Dendritic cell treated with granulocyte-macrophage colony-stimulating factor and Interleukin-4, amounts not matched to agents 40 ng/mL and 50 ng/mL, for 4 days (primary cell): ENCODE measurements at regions of chr7 and their contacts with region 1.

Region 1: GRCh38 chr7:120725376-120726039 is 132.4 kb downstream of the TSPAN12 start:
- H3K4me3 Mint-ChIP-seq: no peak overlapping the region
- H3K27ac Mint-ChIP-seq: no peak overlapping the region
- H3K4me1 Mint-ChIP-seq: no peaks in the 10 kb centered on the region
- H3K27me3 Mint-ChIP-seq: peaks cover 12% of the 10 kb centered on the region

Region 2: GRCh38 chr7:119270045-119270464 is 1455.5 kb before region 1 on chr7:
- intact Hi-C with region 1: loop called (anchors 5 kb)
- H3K4me3 Mint-ChIP-seq: no peak overlapping the region
- H3K27ac Mint-ChIP-seq: no peak overlapping the region
- H3K4me1 Mint-ChIP-seq: no peaks in the 10 kb centered on the region
- H3K27me3 Mint-ChIP-seq: no peaks in the 10 kb centered on the region

Region 3: GRCh38 chr7:119733127-119733879 is 992.2 kb before region 1 on chr7:
- intact Hi-C with region 1: no loop called
- H3K4me3 Mint-ChIP-seq: no peak overlapping the region
- H3K27ac Mint-ChIP-seq: no peak overlapping the region
- H3K4me1 Mint-ChIP-seq: no peaks in the 10 kb centered on the region
- H3K27me3 Mint-ChIP-seq: no peaks in the 10 kb centered on the region

Region 4: GRCh38 chr7:119935418-119936025 is 790.0 kb before region 1 on chr7:
- intact Hi-C with region 1: loop called (anchors 5 kb)
- H3K4me3 Mint-ChIP-seq: no peak overlapping the region
- H3K27ac Mint-ChIP-seq: no peak overlapping the region
- H3K4me1 Mint-ChIP-seq: no peaks in the 10 kb centered on the region
- H3K27me3 Mint-ChIP-seq: no peaks in the 10 kb centered on the region